Activated B cell treated with CpG ODN at 0.5 μM for 24 hours (primary cell): ENCODE measurements at regions of chr2 and their contacts with region 1.

Region 1: DNA sequence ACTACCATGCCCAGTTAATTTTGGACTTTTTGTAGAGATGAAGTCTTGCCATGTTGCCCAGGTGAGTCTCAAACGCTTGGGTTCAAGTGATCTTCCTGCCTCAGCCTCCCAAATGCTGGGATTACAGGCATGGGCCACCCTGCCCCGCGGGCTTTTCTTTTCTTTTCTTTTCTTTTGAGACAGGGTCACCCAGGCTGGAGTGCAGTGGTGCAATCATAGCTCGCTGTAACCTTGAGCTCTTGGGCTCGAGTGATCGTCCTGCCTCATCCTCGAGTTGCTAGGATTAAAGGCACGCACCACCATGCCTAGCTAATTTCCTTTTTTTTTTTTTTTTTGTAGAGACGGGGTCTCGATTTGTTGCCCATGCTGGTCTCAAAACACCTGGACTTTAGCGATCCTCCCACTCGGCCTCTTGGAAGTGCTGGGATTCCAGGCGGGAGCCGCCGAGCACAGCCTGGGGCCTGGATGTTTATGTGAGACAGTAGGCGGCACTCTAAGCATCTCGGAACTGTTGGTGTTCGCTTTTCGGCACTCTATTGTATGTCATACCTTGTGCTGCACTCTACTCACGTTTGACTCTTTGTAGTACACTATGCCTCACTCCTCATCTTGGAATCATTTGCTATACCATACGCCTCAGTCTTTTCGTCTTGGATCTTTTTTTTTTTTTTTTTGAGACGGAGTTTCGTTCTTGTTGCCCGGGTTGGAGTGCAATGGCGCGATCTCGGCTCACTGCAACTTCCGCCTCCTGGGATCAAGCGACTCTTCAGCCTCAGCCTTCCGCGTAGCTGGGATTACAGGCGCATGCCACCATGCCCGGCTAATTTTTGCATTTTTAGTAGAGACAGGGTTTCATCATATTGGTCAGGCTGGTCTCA is 24.5 kb upstream of the ZDBF2 start:
- DNase-seq: no peak
- ATAC-seq: no peak
- H3K4me3 Mint-ChIP-seq: peak overlapping the region; percentile 77
- H3K27ac Mint-ChIP-seq: no peak overlapping the region
- H3K4me1 Mint-ChIP-seq: peaks cover 29% of the 10 kb centered on the region
- H3K27me3 Mint-ChIP-seq: peaks cover 29% of the 10 kb centered on the region
- CTCF ChIP-seq: no peak

Region 2: DNA sequence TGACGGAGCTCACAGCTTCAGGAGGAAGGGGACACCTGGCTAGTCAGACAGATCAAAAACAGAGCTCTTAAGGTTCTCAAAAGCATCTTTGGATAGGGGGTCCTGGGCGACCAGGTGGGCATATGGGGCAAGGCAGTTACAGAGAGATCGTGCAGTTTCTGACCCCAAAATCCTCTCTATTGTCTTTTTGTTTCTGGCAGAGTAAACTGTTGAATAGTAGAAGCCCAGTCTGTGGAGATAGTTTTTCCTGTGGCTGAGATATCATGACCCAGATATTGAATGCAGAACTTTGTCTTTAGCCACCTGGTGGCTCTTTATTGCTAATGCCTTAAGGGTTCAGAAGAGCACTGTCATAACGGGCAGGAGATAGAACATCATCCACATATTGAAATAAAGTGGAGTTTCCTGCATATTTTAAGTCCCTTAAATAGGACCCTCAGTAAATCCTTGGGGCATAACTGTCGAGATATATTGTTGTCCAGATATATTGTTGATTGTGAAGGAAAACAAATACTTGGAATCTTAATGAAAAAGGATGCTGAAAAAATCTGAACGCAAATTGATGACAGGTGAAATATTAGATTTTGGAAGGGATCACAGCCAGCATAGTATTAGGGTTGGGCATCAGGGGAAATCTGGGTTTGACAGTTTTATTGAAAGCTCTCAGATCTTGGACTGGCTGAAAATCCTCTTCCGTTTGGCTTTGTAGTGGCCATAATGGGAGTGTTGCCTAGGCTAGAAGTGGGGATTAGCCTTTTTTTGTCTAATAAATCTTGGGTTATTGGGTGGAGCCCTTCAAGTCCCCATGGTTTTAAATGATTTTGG is 10.4 kb after region 1 on chr2:
- CTCF ChIA-PET with region 1: interaction called, 3 read pairs
- POLR2A ChIA-PET with region 1: no interaction called
- intact Hi-C with region 1: loop called (anchors 2 kb)
- DNase-seq: no peak
- ATAC-seq: peak; percentile 54
- H3K4me3 Mint-ChIP-seq: no peak overlapping the region
- H3K27ac Mint-ChIP-seq: no peak overlapping the region
- H3K4me1 Mint-ChIP-seq: peaks cover 8% of the 10 kb centered on the region
- H3K27me3 Mint-ChIP-seq: peaks cover 57% of the 10 kb centered on the region
- CTCF ChIP-seq: no peak

Region 3: GRCh38 chr2:206336861-206337260 is 86.9 kb after region 1 on chr2:
- CTCF ChIA-PET with region 1: no interaction called
- POLR2A ChIA-PET with region 1: no interaction called
- intact Hi-C with region 1: no loop called
- DNase-seq: no peak
- ATAC-seq: no peak
- H3K4me3 Mint-ChIP-seq: no peak overlapping the region
- H3K27ac Mint-ChIP-seq: no peak overlapping the region
- H3K4me1 Mint-ChIP-seq: no peaks in the 10 kb centered on the region
- H3K27me3 Mint-ChIP-seq: peaks cover 8% of the 10 kb centered on the region
- CTCF ChIP-seq: no peak